ENCODE measurements at regions of chr3 and their contacts with region 1.

Region 1: GRCh38 chr3:58404396-58404795 is 29.2 kb downstream of the PDHB start:
- DNase-seq: no peak
- ATAC-seq: no peak
- H3K4me3 ChIP-seq: no peak overlapping the region
- H3K27ac ChIP-seq: no peak overlapping the region
- H3K4me1 ChIP-seq: no peaks in the 10 kb centered on the region
- H3K27me3 ChIP-seq: no peaks in the 10 kb centered on the region
- CTCF ChIP-seq: no peak

Region 2: DNA sequence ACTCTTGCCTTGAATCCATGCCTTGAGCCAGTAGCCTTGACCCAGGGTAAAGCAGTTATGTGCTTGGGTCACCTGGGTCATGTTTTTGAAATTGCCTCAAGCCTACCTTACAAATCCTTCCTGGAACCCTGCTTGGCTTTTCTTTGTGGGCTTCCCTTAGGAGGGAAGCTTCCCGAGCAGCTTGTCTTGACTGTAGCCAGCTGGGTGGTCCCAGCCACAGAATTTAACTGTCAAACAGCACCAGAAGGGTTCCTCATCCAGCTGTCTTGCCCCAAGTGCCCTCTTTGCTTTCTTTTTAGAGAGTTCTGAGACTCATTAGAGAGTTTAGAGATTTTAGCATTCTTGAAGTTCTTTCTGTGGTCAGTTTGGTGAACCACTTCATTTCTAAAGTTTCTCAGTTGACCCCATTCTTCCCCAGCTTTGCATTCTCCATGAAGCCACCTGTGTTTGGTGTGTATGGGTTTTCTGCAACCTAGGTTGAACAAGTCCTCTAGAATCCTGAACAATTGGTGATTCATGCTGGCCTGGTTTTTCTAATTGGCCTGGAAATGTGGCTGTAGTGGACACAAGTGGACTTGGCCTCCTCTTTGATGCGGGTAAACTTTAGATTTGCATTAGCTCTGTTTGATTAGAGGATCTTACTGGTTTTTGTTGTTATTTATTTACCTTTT is 362.6 kb before region 1 on chr3:
- intact Hi-C with region 1: no loop called
- DNase-seq: no peak
- ATAC-seq: peak; percentile 16
- H3K4me3 ChIP-seq: no peak overlapping the region
- H3K27ac ChIP-seq: no peak overlapping the region
- H3K4me1 ChIP-seq: peaks cover 45% of the 10 kb centered on the region
- H3K27me3 ChIP-seq: no peaks in the 10 kb centered on the region
- CTCF ChIP-seq: no peak

Region 3: GRCh38 chr3:58332575-58333188 is 71.7 kb before region 1 on chr3 and contains the start of gene PXK:
- intact Hi-C with region 1: loop called (anchors 10 kb)
- DNase-seq: peak; percentile 92
- ATAC-seq: peak; percentile 98
- H3K4me3 ChIP-seq: peak within 1 kb of the TSS; percentile 85
- H3K27ac ChIP-seq: peak within 1 kb of the TSS; percentile 60
- H3K4me1 ChIP-seq: peaks cover 30% of the 10 kb centered on the region
- H3K27me3 ChIP-seq: no peaks in the 10 kb centered on the region
- CTCF ChIP-seq: no peak
- total RNA-seq, gene PXK: 29.8 TPM

Measured in upper lobe of right lung (tissue), 1 donor.